IMR-90 (cell line): ENCODE measurements at regions of chr3 and their contacts with region 1.

Region 1: DNA sequence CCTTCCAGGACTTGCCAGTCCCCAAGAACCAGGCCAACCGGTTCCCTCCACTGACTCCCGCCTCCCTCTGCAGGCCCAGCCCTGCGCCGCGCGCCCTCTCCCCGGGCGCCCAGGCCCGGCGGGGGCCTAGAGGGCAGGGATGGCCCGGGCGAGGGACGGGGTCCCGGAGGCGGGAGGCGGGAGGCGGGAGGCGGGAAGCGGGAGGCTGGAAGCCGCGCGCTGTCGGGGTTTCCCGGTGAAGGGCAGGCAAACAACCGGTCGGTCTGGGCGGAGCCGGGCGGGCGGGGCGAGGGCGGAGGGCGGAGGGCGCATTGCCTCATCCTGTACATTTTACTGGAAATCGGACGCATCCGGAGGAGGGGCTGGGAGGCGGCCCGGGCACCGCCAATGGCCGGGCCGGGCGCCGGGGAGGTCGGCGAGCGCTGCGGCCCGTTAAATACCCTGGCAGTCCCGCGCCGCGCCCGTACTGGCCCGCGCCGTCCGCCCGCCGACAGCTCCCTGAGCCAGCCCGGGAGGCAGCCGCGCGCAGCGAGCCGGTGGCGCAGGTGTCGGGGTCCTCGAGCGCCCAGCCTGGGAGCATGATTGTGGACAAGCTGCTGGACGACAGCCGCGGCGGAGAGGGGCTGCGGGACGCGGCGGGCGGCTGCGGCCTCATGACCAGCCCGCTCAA is at the start of gene NFKBIZ:
- DNase-seq: peak; percentile 91
- ATAC-seq: peak; percentile 91
- H3K4me3 ChIP-seq: peak within 1 kb of the TSS; percentile 96
- H3K27ac ChIP-seq: peak within 1 kb of the TSS; percentile 96
- H3K4me1 ChIP-seq: peaks cover 12% of the 10 kb centered on the region
- H3K27me3 ChIP-seq: no peaks in the 10 kb centered on the region
- CTCF ChIP-seq: no peak
- POLR2A ChIP-seq: peak; percentile 100
- RAD21 ChIP-seq: no peak; the same call in 1 of the 2 replicates
- total RNA-seq, gene NFKBIZ: 35.0 and 43.0 TPM in 2 replicates

Region 2: GRCh38 chr3:101809178-101810021 is 39.8 kb before region 1 on chr3:
- CTCF ChIA-PET with region 1: no interaction called
- POLR2A ChIA-PET with region 1: no interaction called
- dilution Hi-C with region 1: no loop called
- in situ Hi-C with region 1: no loop called
- intact Hi-C with region 1: loop called (anchors 5 kb)
- DNase-seq: peak; percentile 56
- ATAC-seq: peak; percentile 77
- H3K4me3 ChIP-seq: no peak overlapping the region
- H3K27ac ChIP-seq: no peak overlapping the region
- H3K4me1 ChIP-seq: peaks cover 2% of the 10 kb centered on the region; the same call in 1 of the 2 replicates
- H3K27me3 ChIP-seq: no peaks in the 10 kb centered on the region
- CTCF ChIP-seq: peak; percentile 72
- POLR2A ChIP-seq: no peak
- RAD21 ChIP-seq: peak; percentile 75

Region 3: GRCh38 chr3:101827211-101828174 is 21.7 kb before region 1 on chr3:
- CTCF ChIA-PET with region 1: no interaction called
- POLR2A ChIA-PET with region 1: interaction called, 6 read pairs
- dilution Hi-C with region 1: no loop called
- in situ Hi-C with region 1: no loop called
- intact Hi-C with region 1: loop called (anchors 1 kb)
- DNase-seq: peak; percentile 84
- ATAC-seq: peak; percentile 82
- H3K4me3 ChIP-seq: peak overlapping the region; percentile 51
- H3K27ac ChIP-seq: peak overlapping the region; percentile 97
- H3K4me1 ChIP-seq: peaks cover 4% of the 10 kb centered on the region; the same call in 1 of the 2 replicates
- H3K27me3 ChIP-seq: no peaks in the 10 kb centered on the region
- CTCF ChIP-seq: no peak
- POLR2A ChIP-seq: peak; percentile 83
- RAD21 ChIP-seq: no peak

Region 4: DNA sequence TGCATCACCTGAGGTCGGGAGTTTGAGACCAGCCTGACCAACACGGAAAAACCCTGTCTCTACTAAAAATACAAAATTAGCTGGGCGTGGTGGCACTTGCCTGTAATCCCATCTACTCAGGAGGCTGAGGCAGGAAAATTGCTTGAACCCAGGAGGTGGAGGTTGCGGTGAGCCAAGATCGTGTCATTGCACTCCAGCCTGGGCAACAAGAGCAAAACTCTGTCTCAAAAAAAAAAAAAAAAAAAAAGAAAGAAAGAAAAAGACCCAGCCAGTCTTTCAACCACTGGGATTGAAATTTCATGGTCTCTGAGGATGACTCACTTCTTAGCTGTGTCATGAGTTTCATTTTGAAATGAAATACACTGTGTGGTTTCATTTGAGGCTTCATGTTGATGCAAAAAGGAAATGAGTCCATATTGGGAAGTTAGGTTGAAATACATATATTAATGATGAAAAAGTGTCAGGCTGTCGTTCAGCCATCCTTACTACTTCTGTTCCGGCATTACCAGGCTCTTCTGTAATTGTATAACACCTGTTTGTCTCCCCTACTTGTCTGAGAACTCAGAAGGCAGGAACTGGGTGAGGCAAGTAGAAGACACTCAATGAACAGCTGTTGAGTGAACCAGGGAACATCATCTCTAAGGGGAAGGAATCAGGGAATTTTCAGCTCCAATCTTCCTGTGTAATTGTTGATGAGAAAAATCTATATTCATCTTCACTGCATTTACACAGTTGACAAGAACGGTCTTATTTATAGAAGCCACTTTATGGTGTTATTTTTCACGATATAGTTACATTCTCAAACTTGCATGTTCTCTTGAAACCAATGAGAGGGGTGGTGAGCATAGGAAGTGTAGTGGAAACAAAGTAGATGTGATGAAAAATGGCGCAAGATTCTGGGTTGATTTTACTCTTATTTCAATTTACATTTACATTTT is 87.5 kb after region 1 on chr3:
- CTCF ChIA-PET with region 1: interaction called, 10 read pairs
- POLR2A ChIA-PET with region 1: no interaction called
- dilution Hi-C with region 1: no loop called
- in situ Hi-C with region 1: no loop called
- intact Hi-C with region 1: loop called (anchors 2 kb)
- DNase-seq: peak; percentile 94
- ATAC-seq: peak; percentile 44
- H3K4me3 ChIP-seq: no peak overlapping the region
- H3K27ac ChIP-seq: peak overlapping the region; percentile 87
- H3K4me1 ChIP-seq: peaks cover 25% of the 10 kb centered on the region
- H3K27me3 ChIP-seq: no peaks in the 10 kb centered on the region
- CTCF ChIP-seq: no peak
- POLR2A ChIP-seq: no peak
- RAD21 ChIP-seq: no peak

Region 5: DNA sequence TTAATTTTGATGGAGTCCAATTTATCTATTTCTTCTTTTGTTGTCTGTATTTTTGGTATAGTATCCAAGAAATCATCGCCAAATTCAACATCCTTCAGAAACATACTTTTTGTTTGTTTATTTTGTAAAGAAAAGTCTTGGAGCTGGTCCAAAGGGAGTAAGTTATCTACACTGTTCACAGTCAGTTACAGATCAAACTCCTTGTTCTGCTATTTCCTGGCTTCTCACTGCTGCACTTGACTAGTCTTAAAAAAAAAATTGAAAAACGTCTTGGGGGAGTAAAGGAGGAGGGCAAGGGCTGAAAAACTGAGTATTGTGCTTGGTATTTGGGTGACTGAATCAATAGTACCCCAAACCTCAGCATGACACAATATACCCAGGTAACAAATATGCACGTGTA is 105.8 kb after region 1 on chr3:
- CTCF ChIA-PET with region 1: no interaction called
- POLR2A ChIA-PET with region 1: no interaction called
- dilution Hi-C with region 1: no loop called
- in situ Hi-C with region 1: no loop called
- intact Hi-C with region 1: no loop called
- DNase-seq: no peak
- ATAC-seq: no peak
- H3K4me3 ChIP-seq: no peak overlapping the region
- H3K27ac ChIP-seq: no peak overlapping the region
- H3K4me1 ChIP-seq: peaks cover 1% of the 10 kb centered on the region; the same call in 1 of the 2 replicates
- H3K27me3 ChIP-seq: no peaks in the 10 kb centered on the region
- CTCF ChIP-seq: no peak
- POLR2A ChIP-seq: no peak
- RAD21 ChIP-seq: no peak

Region 6: DNA sequence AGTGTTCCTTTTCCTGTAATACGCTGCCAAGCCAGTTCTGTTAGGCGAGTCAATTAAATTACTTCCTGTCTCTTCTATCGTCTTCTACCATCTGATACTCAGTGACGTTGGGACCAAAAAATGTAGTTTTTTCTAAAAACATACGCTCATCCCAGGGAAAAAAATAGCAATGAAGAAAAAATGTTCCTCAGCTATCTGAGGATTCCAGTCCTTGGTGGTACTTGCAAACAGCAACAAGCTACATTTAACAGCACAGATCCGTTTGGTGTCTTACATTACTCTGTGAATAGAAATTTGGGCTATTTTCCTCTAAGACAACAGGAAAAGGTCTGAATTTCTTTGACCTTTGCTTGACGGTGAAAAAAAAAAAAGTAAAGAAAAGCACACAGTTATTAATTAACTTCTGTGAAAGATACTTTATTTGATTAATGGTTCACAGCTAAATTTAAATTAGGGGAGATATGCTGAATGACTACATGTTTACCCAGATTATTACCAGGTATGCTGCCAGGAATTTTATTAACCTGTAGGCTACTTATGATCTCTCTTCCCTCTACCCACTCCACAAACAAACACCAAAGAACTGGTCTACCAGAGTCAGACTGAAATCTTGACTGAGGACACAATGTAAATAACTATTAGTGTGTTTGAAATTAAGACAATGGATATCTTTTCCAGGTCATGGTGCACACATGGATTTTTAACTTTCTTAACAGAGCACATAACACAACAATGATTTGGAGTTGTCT is 331.3 kb after region 1 on chr3:
- CTCF ChIA-PET with region 1: no interaction called
- POLR2A ChIA-PET with region 1: no interaction called
- dilution Hi-C with region 1: no loop called
- in situ Hi-C with region 1: no loop called
- intact Hi-C with region 1: loop called (anchors 1 kb)
- DNase-seq: peak; percentile 95
- ATAC-seq: peak; percentile 71
- H3K4me3 ChIP-seq: no peak overlapping the region
- H3K27ac ChIP-seq: peak overlapping the region; percentile 84; the same call in 1 of the 2 replicates
- H3K4me1 ChIP-seq: peaks cover 20% of the 10 kb centered on the region
- H3K27me3 ChIP-seq: no peaks in the 10 kb centered on the region
- CTCF ChIP-seq: no peak
- POLR2A ChIP-seq: peak; percentile 78; the same call in 1 of the 2 replicates
- RAD21 ChIP-seq: no peak